Vagina (tissue), 2 donors: ENCODE measurements at regions of chr2 and their contacts with region 1.

Region 1: GRCh38 chr2:197804049-197804757 is at the start of gene PLCL1:
- DNase-seq: peak in 1 of 2 donors; percentile 93
- H3K4me3 ChIP-seq: peak within 1 kb of the TSS; percentile 70 to 81
- H3K27ac ChIP-seq: peak within 1 kb of the TSS; percentile 66
- H3K4me1 ChIP-seq: peaks cover 11% of the 10 kb centered on the region
- H3K27me3 ChIP-seq: no peaks in the 10 kb centered on the region
- CTCF ChIP-seq: no peak
- POLR2A ChIP-seq: peak in 1 of 2 donors; percentile 55
- total RNA-seq, gene PLCL1: 6.6 TPM

Region 2: DNA sequence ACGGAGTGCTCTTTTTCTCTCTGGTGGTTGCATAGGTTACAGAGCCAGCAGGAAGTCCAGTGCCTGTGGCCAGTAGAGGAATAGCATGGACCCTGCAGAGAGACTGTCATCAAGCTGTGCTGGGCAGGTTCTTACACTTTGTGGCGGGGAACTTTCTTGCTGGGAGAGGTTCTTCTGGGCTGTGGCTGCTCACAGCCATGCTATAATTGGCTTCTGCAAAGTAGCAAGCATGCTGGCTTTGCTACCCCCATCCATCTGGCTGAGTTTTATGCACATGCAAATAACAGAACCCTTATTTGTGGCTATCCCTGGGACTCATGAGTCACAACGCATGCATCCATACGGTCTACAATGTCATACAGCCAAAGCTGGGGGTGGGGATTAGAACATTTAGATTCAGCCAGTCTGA is 69.1 kb after region 1 on chr2:
- intact Hi-C with region 1: no loop called
- DNase-seq: no peak
- H3K4me3 ChIP-seq: no peak overlapping the region
- H3K27ac ChIP-seq: no peak overlapping the region
- H3K4me1 ChIP-seq: peaks cover 6% of the 10 kb centered on the region
- H3K27me3 ChIP-seq: no peaks in the 10 kb centered on the region
- CTCF ChIP-seq: no peak
- POLR2A ChIP-seq: no peak

Region 3: DNA sequence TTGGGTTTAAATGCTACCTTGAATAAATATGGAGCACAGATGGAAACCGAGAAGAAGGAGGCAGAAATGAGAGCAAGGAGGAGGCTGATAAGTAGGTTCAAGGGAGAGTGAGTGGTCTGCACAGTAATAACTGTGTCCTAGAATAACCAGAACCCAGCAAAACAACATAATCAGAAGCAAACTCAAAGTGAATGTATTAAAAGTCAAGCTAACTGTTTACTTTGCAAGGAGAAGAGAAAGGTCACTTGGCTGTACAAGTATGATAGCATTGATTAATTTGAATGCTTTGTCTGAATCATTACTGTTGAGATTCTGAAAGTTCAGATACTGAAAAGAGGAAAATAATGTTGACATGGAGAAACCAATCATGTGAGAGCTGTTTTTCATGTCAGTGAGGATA is 259.0 kb after region 1 on chr2:
- intact Hi-C with region 1: no loop called
- DNase-seq: no peak
- H3K4me3 ChIP-seq: no peak overlapping the region
- H3K27ac ChIP-seq: no peak overlapping the region
- H3K4me1 ChIP-seq: no peaks in the 10 kb centered on the region
- H3K27me3 ChIP-seq: no peaks in the 10 kb centered on the region
- CTCF ChIP-seq: no peak
- POLR2A ChIP-seq: no peak

Region 4: DNA sequence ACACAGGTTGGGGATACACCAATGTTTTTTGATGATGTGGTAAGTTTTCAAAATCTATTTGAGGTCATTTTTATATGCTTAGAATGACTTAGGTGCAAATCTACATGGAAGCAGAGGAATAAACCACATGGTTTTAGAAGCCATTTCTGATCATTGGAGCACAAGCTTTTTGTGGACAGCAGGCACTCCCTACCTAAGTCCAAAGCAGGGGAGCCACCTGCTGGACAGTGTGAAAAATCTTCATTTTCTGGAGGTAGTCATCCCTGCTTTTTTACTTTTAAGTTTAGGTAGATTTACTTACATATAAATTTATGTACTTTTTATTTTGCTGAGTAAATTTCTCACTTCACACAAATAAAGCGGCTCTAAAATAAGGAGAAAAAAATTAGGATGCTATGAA is 323.4 kb after region 1 on chr2:
- intact Hi-C with region 1: loop called (anchors 5 kb)
- DNase-seq: no peak
- H3K4me3 ChIP-seq: no peak overlapping the region
- H3K27ac ChIP-seq: no peak overlapping the region
- H3K4me1 ChIP-seq: no peaks in the 10 kb centered on the region
- H3K27me3 ChIP-seq: no peaks in the 10 kb centered on the region
- CTCF ChIP-seq: peak in 2 of 3 experiments; percentile 35 to 59
- POLR2A ChIP-seq: no peak

Region 5: DNA sequence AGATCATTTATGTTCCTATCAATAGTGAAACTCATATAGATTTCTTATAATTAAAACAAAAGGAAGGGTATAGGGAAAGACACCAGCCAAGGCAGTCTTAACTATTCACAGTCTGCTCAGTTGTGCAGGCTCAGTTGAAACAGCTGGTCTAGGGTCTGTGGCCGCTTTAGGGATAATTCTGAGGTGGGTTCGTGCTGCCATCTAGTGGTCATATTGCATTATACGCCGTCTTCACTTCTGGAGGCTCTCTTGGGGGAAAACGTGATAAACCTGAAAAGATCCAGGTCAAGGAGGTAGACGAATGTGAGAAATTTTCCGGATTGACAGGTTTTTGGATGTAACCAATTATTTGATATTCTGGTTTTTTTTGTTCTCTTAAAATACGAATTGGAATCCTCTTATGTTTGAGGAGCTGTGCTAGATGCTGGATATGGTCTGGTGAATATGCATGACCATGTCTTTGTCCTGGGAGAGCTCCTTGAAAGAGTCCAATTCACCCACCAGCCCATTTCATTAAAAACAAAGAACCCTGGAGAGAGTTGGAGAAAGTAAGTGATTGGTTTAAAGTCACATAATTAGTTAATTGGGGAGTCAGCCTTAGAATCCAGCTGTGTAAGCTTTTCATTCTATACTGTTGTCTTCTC is 492.6 kb after region 1 on chr2:
- intact Hi-C with region 1: loop called (anchors 2 kb)
- DNase-seq: no peak
- H3K4me3 ChIP-seq: no peak overlapping the region
- H3K27ac ChIP-seq: no peak overlapping the region
- H3K4me1 ChIP-seq: no peaks in the 10 kb centered on the region
- H3K27me3 ChIP-seq: no peaks in the 10 kb centered on the region
- CTCF ChIP-seq: peak; percentile 69 to 78 (median 69)
- POLR2A ChIP-seq: no peak